H1 (cell line): ENCODE measurements at regions of chr12 and their contacts with region 1.

Region 1: DNA sequence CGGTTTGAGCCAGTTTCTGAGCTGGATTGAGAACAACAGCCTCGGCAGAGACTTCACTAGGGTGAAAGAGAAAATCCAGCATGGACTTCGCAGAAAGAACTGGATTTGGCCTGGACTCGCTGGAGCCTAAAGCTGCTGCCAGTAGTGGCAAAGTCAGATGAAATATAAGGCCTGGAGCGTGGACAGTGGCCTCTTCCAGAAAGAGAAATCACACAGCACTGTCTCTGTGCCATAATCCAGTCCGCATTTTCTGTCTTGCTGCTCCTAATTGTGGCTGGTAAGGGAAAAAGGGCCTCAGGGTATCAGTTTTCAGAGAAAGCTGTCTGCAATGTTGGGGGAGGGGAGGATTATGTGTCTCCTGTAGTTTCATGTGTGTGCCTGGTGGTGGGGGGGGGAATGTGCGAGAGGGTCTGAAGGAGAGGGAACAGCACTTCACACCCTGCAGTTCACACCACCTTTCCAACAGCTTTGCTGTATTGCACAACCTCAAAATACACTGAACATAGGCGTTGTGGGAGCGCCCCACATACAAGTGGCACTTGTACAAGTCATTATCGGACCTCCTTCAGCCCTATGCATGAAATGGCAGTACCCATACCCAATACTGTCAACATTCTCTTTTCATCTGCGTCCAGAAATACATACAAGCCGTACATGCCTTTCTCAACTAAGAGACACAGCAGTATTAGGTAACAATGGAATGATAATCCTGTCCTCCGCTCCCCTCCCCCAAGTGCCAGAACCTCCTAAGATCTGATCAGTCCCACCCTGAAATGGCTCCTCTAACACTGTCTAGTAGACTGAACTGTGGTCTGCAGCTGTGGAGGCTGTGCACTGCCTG is 107.5 kb upstream of the ATF7IP start:
- DNase-seq: peak; percentile 96 to 97
- H3K4me3 ChIP-seq: peak overlapping the region in 3 of 4 experiments; percentile 9 to 39 (median 20); a peak in 3 of 8 replicates
- H3K27ac ChIP-seq: peak overlapping the region; percentile 95
- H3K4me1 ChIP-seq: peaks cover 19 to 34% (median 27%) of the 10 kb centered on the region in 4 experiments
- H3K27me3 ChIP-seq: no peaks in the 10 kb centered on the region
- CTCF ChIP-seq: no peak
- EP300 ChIP-seq: peak in 1 of 2 experiments; percentile 91; a peak in 2 of 3 replicates
- POLR2A ChIP-seq: peak; percentile 24 to 83
- RAD21 ChIP-seq: peak in 1 of 2 experiments; percentile 47

Region 2: DNA sequence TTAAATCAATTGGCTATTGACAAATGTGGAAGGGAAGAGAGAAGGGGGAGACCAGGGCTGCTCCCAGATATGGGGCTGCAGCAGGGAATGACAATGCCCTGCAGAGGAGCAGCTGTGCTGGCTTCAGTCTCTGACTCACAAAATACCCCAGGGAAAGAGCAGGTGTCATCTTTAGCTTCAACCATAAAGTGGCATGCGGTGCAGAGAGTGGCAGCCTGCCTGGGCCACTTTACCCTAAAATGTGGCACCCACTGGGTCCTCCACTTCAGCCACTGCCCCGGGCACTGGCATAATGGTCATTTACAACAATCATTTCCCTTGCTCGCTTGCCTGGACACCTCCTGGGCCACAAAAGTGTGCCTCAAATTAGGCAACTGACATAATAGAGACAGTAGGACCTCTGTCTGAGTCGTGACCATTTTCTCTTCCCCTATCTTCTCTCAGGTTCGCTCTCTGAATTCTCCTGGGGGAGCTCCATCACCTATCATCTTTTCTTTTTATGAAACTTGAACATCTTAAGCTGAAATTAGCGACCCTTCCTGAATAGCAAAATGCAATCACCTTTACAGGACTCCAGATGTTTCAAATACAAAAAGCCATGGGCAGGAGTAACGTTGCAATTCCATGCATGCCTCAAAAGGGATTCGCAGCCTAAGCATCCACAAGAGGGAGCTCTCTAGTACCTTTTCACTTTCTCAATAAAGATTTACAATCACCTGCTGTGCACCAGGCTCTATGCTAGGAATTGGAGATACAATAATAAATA is 72.3 kb before region 1 on chr12:
- CTCF ChIA-PET with region 1: interaction called, 10 read pairs
- POLR2A ChIA-PET with region 1: no interaction called
- DNase-seq: peak in 1 of 2 experiments; percentile 60
- H3K4me3 ChIP-seq: no peak overlapping the region
- H3K27ac ChIP-seq: no peak overlapping the region
- H3K4me1 ChIP-seq: no peaks in the 10 kb centered on the region; a peak in 1 of 7 replicates
- H3K27me3 ChIP-seq: no peaks in the 10 kb centered on the region
- CTCF ChIP-seq: peak in 2 of 3 experiments; percentile 61 to 78; a peak in 3 of 4 replicates
- EP300 ChIP-seq: no peak
- POLR2A ChIP-seq: no peak
- RAD21 ChIP-seq: peak; percentile 74 to 80

Region 3: DNA sequence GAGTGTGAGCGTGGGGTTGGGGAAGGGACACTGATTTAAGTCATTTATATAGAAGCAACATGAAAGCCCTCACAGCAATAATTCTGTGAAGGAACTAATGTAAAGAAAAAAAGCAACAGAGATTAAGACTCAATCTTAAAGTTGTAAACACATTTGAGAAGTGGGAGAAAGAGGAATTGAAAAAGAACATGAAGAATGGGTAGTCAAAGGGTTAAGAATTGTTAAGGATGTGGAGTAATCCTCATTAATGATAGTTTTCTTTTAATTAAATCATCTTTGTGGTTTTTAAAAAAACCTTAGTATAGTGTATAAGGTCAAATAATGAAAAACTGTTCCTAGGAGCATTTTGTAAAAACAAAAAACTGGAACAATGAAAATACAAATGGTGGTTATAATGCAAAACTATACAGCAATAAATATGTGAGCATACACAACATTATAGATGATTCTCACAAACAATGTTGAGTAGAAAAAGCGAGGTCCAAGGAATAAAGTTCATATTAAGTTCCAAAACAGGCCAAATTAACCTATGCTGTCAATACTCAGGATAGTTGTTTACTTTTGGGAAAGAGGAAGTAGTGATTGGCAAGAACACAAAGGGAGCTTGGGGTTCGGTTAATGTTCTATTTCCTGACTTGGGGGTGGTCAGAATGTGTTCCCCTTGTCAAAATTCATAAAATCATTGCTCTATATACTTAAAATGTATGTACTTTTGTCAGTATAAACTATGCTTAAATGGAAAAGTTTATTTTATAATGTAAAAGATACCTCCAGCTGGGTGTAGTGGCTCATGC is 12.9 kb before region 1 on chr12:
- CTCF ChIA-PET with region 1: interaction called, 58 read pairs
- POLR2A ChIA-PET with region 1: interaction called, 13 read pairs
- DNase-seq: no peak
- H3K4me3 ChIP-seq: no peak overlapping the region
- H3K27ac ChIP-seq: no peak overlapping the region
- H3K4me1 ChIP-seq: peaks cover 2 to 5% (median 3%) of the 10 kb centered on the region in 4 experiments; a peak in 4 of 7 replicates
- H3K27me3 ChIP-seq: no peaks in the 10 kb centered on the region
- CTCF ChIP-seq: no peak
- EP300 ChIP-seq: no peak
- POLR2A ChIP-seq: no peak
- RAD21 ChIP-seq: no peak

Region 4: GRCh38 chr12:14284184-14284722 is 26.3 kb after region 1 on chr12:
- CTCF ChIA-PET with region 1: interaction called, 4 read pairs
- POLR2A ChIA-PET with region 1: interaction called, 20 read pairs
- DNase-seq: no peak
- H3K4me3 ChIP-seq: peak overlapping the region in 1 of 4 experiments; percentile 27; a peak in 1 of 8 replicates
- H3K27ac ChIP-seq: peak overlapping the region; percentile 35; the same call in 1 of the 2 replicates
- H3K4me1 ChIP-seq: peaks cover 3 to 12% (median 7%) of the 10 kb centered on the region in 4 experiments; a peak in 4 of 7 replicates
- H3K27me3 ChIP-seq: peaks cover 33 to 70% (median 57%) of the 10 kb centered on the region in 4 experiments
- CTCF ChIP-seq: peak in 1 of 3 experiments; percentile 15; a peak in 1 of 4 replicates
- EP300 ChIP-seq: no peak
- POLR2A ChIP-seq: no peak
- RAD21 ChIP-seq: peak in 1 of 2 experiments; percentile 20; a peak in 2 of 4 replicates

Region 5: GRCh38 chr12:14384783-14385638 is 127.1 kb after region 1 on chr12:
- CTCF ChIA-PET with region 1: interaction called, 3 read pairs
- POLR2A ChIA-PET with region 1: interaction called, 26 read pairs
- DNase-seq: peak; percentile 33 to 63
- H3K4me3 ChIP-seq: peak overlapping the region in 3 of 4 experiments; percentile 3 to 49 (median 11); a peak in 4 of 8 replicates
- H3K27ac ChIP-seq: peak overlapping the region; percentile 68; the same call in 1 of the 2 replicates
- H3K4me1 ChIP-seq: peaks cover 0 to 34% (median 7%) of the 10 kb centered on the region in 4 experiments; a peak in 5 of 7 replicates
- H3K27me3 ChIP-seq: no peaks in the 10 kb centered on the region
- CTCF ChIP-seq: no peak
- EP300 ChIP-seq: no peak
- POLR2A ChIP-seq: no peak; a peak in 1 of 3 replicates
- RAD21 ChIP-seq: 0 out of 4 replicates have a peak, but pooled peaks of 1 of the 2 experiments have one; percentile 13

Region 6: DNA sequence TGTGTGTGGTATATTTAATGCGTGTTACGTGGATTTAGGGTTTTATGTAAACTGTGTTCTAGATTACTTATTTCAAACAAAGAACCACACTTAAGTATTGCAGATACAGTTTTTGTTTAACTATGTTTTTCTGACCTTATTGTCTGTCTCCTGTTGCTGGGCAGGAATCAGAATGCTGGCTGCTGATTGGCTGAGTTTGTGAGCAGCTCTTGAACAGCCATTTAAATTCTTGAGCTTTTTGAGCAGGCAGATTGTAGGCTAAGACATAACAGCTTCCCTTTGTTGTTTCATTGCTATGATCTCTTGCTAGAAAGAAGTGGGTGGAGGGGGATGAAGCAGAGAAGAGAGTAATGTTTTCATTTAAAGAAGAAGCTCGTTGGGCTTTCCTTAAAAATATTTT is 159.8 kb after region 1 on chr12:
- CTCF ChIA-PET with region 1: interaction called, 4 read pairs
- POLR2A ChIA-PET with region 1: interaction called, 13 read pairs
- DNase-seq: peak; percentile 64 to 72
- H3K4me3 ChIP-seq: peak overlapping the region in 1 of 4 experiments; percentile 36; a peak in 1 of 8 replicates
- H3K27ac ChIP-seq: peak overlapping the region; percentile 32; the same call in 1 of the 2 replicates
- H3K4me1 ChIP-seq: peaks cover 0 to 12% (median 4%) of the 10 kb centered on the region in 4 experiments; a peak in 2 of 7 replicates
- H3K27me3 ChIP-seq: no peaks in the 10 kb centered on the region
- CTCF ChIP-seq: no peak
- EP300 ChIP-seq: no peak
- POLR2A ChIP-seq: no peak
- RAD21 ChIP-seq: no peak

Region 7: GRCh38 chr12:14678547-14679150 is 420.7 kb after region 1 on chr12:
- CTCF ChIA-PET with region 1: no interaction called
- POLR2A ChIA-PET with region 1: no interaction called
- DNase-seq: no peak
- H3K4me3 ChIP-seq: no peak overlapping the region
- H3K27ac ChIP-seq: no peak overlapping the region
- H3K4me1 ChIP-seq: no peaks in the 10 kb centered on the region
- H3K27me3 ChIP-seq: peaks cover 0 to 9% (median 1%) of the 10 kb centered on the region in 4 experiments; a peak in 3 of 7 replicates
- CTCF ChIP-seq: no peak
- EP300 ChIP-seq: no peak
- POLR2A ChIP-seq: no peak
- RAD21 ChIP-seq: no peak

Region 8: DNA sequence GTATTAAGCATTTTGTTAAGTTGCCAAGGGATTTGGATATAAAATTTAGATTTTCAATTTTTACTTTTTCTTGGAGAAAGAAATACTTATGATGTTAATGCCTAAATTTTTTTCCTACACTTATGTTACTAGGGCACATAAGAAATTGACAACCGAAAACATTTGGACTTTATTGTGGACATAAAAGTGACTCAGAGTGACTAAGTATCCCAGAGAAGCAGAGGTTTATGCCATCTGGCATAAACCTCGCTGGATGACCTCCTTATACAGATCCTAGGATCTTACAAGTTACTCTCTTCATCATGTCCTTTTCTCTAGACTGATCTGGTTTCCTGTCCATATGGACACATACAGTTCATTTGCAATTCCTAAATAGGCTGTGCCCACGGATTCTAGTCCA is 873.5 kb after region 1 on chr12:
- CTCF ChIA-PET with region 1: no interaction called
- POLR2A ChIA-PET with region 1: no interaction called
- DNase-seq: no peak
- H3K4me3 ChIP-seq: no peak overlapping the region
- H3K27ac ChIP-seq: no peak overlapping the region
- H3K4me1 ChIP-seq: no peaks in the 10 kb centered on the region
- H3K27me3 ChIP-seq: no peaks in the 10 kb centered on the region
- CTCF ChIP-seq: no peak
- EP300 ChIP-seq: no peak
- POLR2A ChIP-seq: no peak
- RAD21 ChIP-seq: no peak